ENCODE measurements at regions of chr1 and their contacts with region 1.

Region 1: DNA sequence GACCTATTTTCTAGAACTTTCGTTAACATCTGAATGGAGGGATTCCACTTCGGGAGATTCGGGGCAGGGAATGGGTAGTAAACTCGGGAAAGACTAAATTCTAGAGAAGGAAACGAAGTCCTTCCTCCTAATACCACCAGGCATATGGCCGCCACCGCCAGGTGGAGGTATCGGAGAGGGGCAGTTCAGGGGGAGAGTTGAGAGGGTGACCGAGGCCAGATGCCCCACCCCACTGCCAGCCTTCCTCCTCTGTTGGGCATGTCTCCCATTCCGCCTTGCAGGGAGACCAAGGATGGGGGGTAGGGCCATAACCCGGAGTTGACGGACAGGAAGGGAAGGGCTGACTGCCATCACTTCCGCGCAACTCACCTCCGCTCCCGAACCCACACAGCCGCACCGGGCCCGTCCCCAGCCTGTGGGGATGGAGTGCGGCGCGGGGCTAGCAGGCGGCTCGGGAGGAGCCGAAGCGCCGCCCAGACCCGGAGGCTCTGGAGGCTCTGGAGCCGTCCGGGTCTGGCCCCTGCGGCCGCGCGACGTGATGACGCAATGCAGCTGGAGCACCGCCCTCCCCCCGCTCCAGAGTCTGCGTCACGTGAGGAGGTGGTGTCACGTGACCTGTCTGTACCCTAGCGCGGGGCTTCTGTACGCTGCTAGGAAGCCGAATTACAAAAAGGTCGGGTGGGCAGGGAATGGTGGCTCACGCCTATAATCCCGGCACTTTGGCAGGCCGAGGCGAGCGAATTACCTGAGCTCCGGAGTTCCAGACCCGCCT is at the start of gene KLHL12:
- DNase-seq: peak; percentile 98
- H3K4me3 ChIP-seq: peak within 1 kb of the TSS; percentile 83 to 100 (median 98)
- H3K27ac ChIP-seq: peak within 1 kb of the TSS; percentile 74 to 91
- H3K4me1 ChIP-seq: peaks cover 0 to 16% (median 6%) of the 10 kb centered on the region in 4 experiments
- H3K27me3 ChIP-seq: no peaks in the 10 kb centered on the region

Region 2: GRCh38 chr1:202944438-202944921 is 17.6 kb after region 1 on chr1:
- CTCF ChIA-PET with region 1: interaction called, 10 read pairs
- POLR2A ChIA-PET with region 1: interaction called, 3 read pairs
- DNase-seq: peak; percentile 32 to 70 (median 40)
- H3K4me3 ChIP-seq: no peak overlapping the region
- H3K27ac ChIP-seq: no peak overlapping the region
- H3K4me1 ChIP-seq: no peaks in the 10 kb centered on the region
- H3K27me3 ChIP-seq: no peaks in the 10 kb centered on the region

Region 3: DNA sequence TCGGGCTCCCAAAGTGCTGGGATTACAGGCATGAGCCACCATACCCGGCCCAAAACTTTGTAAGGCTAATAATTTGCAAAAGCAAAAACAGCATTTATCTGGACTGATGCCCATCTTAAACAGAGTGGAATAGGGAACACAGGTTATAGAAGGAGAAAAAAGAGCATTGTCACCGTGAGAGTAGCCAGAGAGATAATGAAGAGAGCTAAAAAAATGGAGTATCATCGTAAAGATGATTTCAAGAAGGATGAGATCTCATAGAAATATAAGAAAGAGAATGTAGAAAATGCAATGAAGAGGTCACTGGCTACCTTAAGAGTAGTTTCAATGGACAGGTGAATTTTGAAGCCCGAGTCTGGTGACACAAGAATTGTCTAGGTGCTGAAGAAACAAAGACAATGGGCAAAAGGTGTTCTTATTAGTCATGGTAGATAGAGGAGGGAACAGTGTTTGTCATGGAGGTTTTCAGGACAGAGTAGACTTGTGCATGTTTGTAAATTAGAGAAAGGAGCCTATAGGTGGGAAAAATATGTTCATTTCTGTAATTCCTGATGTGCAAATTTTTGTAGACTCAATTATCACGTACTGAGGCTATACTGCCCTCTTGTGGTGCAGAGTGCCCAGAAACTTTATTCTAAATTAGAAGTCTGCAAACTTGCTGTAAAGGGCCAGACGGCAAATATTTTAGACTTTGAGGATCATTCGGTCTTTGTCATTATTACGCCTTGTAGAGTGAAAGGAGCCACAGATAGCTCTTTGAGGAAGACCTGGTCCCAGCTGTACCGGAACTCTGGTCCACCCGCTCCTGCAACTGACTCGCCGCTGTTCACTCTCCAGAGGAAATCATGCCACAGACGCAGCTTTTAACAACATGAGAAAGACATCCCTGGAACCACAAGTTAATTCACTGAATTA is 72.2 kb after region 1 on chr1:
- CTCF ChIA-PET with region 1: interaction called, 10 read pairs
- POLR2A ChIA-PET with region 1: no interaction called
- DNase-seq: peak; percentile 74 to 88 (median 85)
- H3K4me3 ChIP-seq: peak overlapping the region in 6 of 7 experiments; percentile 37 to 68 (median 50)
- H3K27ac ChIP-seq: peak overlapping the region in 1 of 2 experiments; percentile 49
- H3K4me1 ChIP-seq: peaks cover 4 to 16% (median 10%) of the 10 kb centered on the region in 4 experiments
- H3K27me3 ChIP-seq: no peaks in the 10 kb centered on the region

Measured in common myeloid progenitor, CD34-positive (primary cell).